Right ventricle myocardium inferior (tissue), 1 donor: ENCODE measurements at regions of chr11 and their contacts with region 1.

Region 1: GRCh38 chr11:126062679-126063506 is at the start of gene CDON:
- DNase-seq: peak; percentile 94
- ATAC-seq: peak; percentile 99
- total RNA-seq, gene CDON: 18.6 TPM

Region 2: DNA sequence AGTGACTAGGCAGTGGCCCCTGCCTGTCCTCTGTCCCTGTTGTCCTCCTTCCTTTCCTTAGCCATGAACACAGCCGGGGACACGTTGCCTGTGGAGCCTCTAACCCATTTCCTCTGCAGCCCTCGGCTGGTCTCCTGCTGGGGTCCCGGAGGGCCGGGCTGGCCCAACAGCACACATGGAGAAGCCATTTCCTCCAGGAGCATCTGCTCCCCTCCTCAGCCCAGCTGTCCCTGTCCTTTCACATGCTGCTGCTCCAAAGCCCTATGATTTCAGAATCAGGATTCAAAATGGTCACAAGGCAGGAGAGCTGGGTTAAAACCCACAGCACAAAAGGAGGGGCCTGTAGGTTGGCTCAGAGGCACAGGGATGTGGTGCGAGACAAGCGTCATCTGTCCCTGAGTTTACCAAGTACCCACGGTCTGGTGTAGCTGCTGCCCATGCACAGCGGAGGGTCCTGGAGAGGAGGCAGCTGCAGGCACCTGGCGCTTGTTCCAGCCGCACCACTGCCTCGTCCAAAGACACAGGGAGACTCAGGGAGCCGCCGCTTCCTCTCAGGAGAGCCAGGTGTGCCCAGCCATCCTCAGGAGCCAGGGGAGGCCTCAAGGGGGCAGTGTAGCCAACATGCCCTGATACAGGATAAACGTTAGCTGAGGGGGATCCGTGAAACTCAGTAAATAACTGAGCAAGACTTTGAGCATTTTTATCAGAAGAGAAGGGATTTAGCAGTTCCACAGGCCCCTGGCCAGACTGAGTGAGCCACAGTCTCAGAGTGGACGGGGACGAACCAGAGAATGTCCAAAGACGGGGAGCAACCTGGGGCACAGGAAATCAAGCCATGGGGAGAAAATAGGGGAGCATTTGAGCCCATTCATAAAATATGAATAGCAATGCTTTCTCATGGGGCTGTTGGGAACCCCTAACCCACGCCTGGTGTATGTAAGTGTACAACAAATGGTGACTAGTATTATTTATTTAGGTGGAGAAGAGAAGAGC is 121.0 kb before region 1 on chr11:
- intact Hi-C with region 1: loop called (anchors 5 kb)
- DNase-seq: no peak
- ATAC-seq: peak; percentile 74

Region 3: DNA sequence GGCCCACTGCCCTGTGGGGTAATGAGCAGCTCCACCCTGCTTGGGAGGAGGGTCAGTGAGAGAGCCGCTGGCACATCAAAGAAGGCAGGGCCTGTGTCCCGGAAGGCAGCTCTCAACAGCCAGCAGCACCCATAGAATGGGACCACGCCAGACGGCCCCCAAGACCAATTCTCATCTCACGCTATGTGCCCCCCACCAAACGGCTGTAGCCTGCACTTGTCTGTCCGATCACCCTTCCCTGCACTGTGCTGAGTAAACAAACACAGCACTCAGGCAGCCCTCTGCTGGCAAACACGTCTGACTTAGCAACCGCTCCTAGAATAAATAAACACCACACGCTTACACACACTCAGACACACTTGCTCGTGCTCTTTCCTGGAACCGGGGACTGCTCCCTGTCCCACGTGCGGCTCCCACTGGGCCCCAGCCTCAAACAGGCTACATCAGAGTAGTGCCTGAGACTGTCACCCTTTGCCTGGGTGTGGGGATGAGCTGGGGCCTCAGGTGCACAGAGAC is 53.0 kb after region 1 on chr11:
- intact Hi-C with region 1: loop called (anchors 2 kb)
- DNase-seq: peak; percentile 81
- ATAC-seq: peak; percentile 75

Region 4: GRCh38 chr11:126194121-126194543 is 131.2 kb after region 1 on chr11:
- intact Hi-C with region 1: loop called (anchors 5 kb)
- DNase-seq: no peak
- ATAC-seq: peak; percentile 74

Region 5: GRCh38 chr11:126211235-126212088 is 148.6 kb after region 1 on chr11 and contains the starts of genes FAM118B and RPUSD4:
- intact Hi-C with region 1: loop called (anchors 5 kb)
- DNase-seq: peak; percentile 100
- ATAC-seq: peak; percentile 99
- total RNA-seq, gene FAM118B: 25.6 TPM
- total RNA-seq, gene RPUSD4: 40.0 TPM